ENCODE measurements at regions of chr7 and their contacts with region 1.

Region 1: DNA sequence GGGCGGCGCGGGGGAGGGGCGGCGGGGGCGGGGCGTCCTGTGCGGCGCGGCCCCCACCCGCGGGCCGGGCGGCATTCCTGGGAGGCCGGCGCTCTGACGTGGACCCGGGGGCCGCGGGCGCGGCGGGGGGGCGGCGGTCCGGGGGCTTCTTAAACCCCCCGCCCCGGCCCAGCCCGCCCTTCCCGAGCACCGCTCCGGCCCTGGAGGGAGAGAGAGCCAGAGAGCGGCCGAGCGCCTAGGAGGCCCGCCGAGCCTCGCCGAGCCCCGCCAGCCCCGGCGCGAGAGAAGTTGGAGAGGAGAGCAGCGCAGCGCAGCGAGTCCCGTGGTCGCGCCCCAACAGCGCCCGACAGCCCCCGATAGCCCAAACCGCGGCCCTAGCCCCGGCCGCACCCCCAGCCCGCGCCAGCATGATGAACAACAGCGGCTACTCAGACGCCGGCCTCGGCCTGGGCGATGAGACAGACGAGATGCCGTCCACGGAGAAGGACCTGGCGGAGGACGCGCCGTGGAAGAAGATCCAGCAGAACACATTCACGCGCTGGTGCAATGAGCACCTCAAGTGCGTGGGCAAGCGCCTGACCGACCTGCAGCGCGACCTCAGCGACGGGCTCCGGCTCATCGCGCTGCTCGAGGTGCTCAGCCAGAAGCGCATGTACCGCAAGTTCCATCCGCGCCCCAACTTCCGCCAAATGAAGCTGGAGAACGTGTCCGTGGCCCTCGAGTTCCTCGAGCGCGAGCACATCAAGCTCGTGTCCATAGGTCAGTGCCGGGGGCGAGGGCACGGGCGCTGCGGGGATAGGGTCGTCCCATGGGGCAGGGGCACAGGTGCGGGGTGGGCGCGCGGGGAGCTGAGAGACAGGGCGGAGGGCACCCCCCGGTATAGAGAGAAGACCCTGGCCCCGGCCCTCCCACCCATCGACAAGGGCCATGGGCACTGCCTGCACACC is at the start of gene FLNC:
- DNase-seq: peak; percentile 45
- ATAC-seq: peak; percentile 2; the same call in 1 of the 2 replicates
- H3K4me3 Mint-ChIP-seq: peak within 1 kb of the TSS; percentile 77
- H3K27ac Mint-ChIP-seq: no peak within 1 kb of the TSS
- H3K4me1 Mint-ChIP-seq: peaks cover 39% of the 10 kb centered on the region
- H3K27me3 Mint-ChIP-seq: peaks cover 32% of the 10 kb centered on the region
- CTCF ChIP-seq: no peak
- total RNA-seq, gene FLNC: 6.3 to 8.0 TPM (median 6.8 TPM) in 3 replicates

Region 2: DNA sequence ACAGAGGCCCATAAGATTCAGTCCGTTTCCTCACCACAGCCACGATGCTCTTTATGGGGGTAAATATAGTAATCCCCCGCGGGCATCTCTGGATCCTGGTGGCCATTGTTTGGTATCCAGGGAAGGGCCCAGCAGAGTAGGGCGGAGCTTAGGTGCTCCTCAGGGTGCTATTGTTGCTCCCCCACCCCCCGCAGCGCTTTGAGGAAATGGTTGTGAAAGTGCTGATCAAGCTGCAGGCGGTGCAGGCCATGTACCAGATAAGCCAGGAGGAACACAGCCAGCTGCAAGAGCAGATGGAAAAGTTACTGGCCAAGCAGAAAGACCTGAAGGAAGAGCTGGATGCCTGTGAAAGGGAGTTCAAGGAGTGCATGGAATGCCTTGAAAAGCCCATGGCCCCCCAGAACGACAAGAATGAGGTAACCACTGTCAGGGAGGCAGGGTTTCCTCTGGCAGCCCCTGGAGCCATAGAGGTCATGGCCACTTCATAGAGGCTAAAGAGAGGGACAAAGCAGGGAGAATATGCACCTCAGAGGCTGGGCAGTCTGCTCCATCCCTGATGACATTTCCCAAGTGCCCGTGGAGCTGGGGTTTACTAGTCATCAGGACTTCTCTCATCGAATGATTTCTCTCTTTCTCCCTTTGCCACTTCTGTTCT is 17.9 kb before region 1 on chr7:
- CTCF ChIA-PET with region 1: interaction called, 12 read pairs
- POLR2A ChIA-PET with region 1: interaction called, 3 read pairs
- DNase-seq: no peak
- ATAC-seq: peak; percentile 34
- H3K4me3 Mint-ChIP-seq: no peak overlapping the region
- H3K27ac Mint-ChIP-seq: no peak overlapping the region
- H3K4me1 Mint-ChIP-seq: no peaks in the 10 kb centered on the region
- H3K27me3 Mint-ChIP-seq: no peaks in the 10 kb centered on the region
- CTCF ChIP-seq: no peak

Region 3: DNA sequence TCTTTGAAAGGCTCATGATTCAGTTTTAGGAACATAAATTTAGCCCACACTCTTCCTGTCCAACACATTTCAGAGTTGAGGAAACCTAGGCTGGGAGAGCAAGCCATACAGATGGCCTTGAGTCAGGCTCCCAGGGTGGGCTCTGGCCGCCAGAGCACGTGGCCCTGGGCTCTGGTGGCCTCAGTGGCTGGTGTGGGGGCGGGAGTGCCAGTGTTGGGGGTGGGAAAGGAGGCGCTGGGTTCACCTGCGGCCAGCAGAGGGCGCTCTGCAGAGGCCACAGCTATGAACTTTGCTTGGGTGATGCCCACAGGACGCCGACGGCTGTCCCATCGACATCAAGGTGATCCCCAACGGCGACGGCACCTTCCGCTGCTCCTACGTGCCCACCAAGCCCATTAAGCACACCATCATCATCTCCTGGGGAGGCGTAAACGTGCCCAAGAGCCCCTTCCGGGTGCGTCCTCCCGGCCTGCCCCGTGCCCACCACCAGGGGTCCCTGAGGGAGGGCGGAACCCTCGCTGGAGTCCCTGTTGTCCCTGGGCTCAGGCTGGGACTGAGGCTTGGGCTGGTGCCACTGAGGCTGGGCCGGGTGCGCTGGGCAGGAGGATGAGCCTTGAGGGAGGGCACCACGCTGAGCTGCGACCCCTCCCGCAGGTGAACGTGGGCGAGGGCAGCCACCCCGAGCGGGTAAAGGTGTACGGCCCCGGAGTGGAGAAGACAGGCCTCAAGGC is 11.6 kb after region 1 on chr7:
- CTCF ChIA-PET with region 1: interaction called, 97 read pairs
- POLR2A ChIA-PET with region 1: interaction called, 3 read pairs
- DNase-seq: peak; percentile 78
- ATAC-seq: peak; percentile 71
- H3K4me3 Mint-ChIP-seq: peak overlapping the region; percentile 40; the same call in 1 of the 2 replicates
- H3K27ac Mint-ChIP-seq: no peak overlapping the region; the same call in 1 of the 2 replicates
- H3K4me1 Mint-ChIP-seq: peaks cover 8% of the 10 kb centered on the region
- H3K27me3 Mint-ChIP-seq: no peaks in the 10 kb centered on the region; the same call in 1 of the 2 replicates
- CTCF ChIP-seq: peak; percentile 98

Region 4: DNA sequence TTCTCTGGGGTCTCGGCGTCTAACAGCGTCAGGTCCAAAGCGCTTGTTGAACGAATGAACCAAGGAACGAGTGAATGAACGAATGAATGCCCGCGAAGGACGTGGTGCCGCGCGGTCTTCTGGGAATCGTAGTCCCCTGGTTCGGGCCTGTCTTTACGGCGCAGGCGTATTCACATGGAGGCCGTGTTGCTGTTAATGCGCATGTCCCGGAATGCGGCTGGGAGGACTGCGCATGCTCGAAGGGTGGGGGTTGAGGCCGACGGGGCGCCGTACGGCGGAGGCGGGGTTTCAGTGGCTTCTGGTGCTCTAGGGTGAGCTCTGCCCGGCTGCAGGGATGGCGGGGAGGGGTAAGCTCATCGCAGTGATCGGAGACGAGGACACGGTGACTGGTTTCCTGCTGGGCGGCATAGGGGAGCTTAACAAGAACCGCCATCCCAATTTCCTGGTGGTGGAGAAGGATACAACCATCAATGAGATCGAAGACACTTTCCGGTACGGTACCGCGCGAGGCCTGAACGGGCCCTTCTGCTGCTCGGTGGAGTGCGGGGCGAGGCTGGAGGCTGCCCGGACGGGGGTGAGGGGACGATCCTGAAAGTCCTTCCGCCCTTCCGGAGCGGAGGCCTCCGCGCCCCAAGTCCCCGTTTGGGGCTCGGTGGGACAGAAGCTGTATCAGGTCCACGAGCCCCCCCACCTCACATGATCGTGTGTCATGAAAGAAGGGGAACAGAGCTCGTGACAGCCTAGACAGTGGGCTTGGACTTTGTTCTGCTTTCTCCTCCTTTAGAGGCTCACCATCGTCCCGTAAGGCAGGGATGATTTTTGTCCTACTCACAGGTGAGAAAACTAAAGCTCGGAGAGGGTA is 32.3 kb after region 1 on chr7 and contains the start of gene ATP6V1F:
- CTCF ChIA-PET with region 1: interaction called, 27 read pairs
- POLR2A ChIA-PET with region 1: interaction called, 3 read pairs
- DNase-seq: peak; percentile 99
- ATAC-seq: peak; percentile 85
- H3K4me3 Mint-ChIP-seq: peak within 1 kb of the TSS; percentile 98
- H3K27ac Mint-ChIP-seq: peak within 1 kb of the TSS; percentile 97
- H3K4me1 Mint-ChIP-seq: peaks cover 31% of the 10 kb centered on the region
- H3K27me3 Mint-ChIP-seq: peaks cover 16% of the 10 kb centered on the region
- CTCF ChIP-seq: no peak
- total RNA-seq, gene ATP6V1F: 117 to 121 TPM (median 120 TPM) in 3 replicates

Region 5: DNA sequence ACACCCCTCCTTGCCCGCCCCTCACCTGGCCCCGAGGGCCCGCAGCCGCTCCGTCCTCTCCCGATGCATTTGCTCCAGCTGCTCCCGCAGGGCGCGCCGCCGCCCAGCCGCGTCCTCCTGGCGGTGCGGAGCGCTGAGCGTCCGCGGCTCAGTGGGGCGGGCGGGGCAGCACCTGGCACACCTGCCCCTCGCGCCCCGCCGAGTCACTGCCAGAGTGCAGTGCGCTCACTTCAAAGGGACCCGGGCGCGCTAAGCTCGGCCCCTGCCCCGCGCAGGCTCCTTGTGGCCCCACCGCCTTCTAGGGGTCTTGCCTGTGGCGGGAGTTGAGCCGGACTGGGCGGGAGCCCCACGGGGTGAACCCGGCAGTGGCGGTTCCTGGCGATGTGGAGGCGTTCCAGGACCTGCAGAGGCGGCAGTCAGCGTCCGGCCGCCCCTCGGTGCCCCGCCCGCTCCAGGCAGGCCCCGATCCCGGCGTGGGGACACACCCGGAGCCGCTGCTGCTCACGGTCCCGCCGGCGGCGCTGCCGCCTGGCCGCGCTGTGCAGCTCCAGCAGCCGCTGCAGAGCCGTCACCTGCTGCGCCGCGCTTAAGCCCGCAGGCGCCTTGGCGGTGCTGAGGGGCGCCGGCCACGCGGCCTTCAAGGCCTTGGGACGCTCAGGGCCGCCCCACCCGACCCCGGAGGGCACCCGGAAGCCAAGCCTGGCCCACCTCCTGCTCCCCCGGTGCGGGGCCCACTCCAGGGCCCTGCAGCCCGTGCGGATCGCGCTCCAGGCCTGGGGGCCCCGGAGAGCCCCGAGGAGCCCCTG is 38.8 kb after region 1 on chr7:
- CTCF ChIA-PET with region 1: interaction called, 27 read pairs
- POLR2A ChIA-PET with region 1: interaction called, 3 read pairs
- DNase-seq: peak; percentile 62
- ATAC-seq: peak; percentile 56
- H3K4me3 Mint-ChIP-seq: peak overlapping the region; percentile 66
- H3K27ac Mint-ChIP-seq: no peak overlapping the region
- H3K4me1 Mint-ChIP-seq: peaks cover 20% of the 10 kb centered on the region
- H3K27me3 Mint-ChIP-seq: peaks cover 49% of the 10 kb centered on the region
- CTCF ChIP-seq: no peak

Region 6: GRCh38 chr7:128895320-128895719 is 64.8 kb after region 1 on chr7:
- CTCF ChIA-PET with region 1: no interaction called
- POLR2A ChIA-PET with region 1: no interaction called
- DNase-seq: no peak
- ATAC-seq: no peak
- H3K4me3 Mint-ChIP-seq: no peak overlapping the region
- H3K27ac Mint-ChIP-seq: no peak overlapping the region
- H3K4me1 Mint-ChIP-seq: 0 out of 2 replicates have a peak, but pooled peaks cover 3% of the 10 kb centered on the region
- H3K27me3 Mint-ChIP-seq: peaks cover 8% of the 10 kb centered on the region
- CTCF ChIP-seq: no peak